Activated CD4-positive, alpha-beta T cell treated with anti-CD3 and anti-CD28 coated beads for 36 hours (primary cell): ENCODE measurements at regions of chr5 and their contacts with region 1.

Region 1: DNA sequence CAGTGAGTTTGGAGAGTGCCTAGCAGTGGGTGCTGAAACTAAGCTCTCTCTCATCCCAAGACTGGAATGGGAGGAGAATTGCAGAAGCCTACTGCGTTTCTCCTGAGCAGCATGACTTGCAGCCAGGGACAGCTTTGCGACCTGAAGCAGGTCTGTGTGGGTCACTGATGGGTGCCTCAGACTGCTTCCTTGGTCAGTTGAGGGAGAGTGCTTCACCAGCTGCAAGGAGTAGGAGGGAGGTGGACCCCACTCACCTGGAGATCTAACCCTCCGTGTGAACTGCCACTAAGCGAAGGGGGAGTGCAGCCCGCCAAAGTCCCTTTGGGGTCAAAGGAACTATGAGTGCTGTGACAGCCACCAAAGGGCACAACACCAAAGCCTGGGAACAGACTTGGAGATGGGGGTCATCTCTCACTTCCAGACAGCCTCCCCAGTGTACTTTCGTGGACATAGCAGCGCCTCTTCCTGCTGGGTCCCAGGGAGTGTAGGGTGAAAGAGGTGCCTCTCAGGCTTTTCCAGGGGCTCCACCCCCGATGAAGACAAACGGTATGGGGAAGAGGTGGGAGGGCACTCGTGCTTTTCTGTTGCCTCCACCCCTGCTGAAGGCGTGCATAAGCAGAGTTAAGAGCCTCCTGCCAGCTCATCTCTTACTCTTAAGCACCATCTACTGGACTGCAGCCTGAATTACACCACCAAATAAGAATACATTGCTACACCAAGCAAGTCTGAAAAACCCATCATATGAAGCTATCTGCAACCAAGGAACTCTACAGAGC is 34.3 kb upstream of the MACIR start:
- DNase-seq: peak; percentile 51
- ATAC-seq: peak; percentile 91
- H3K4me3 Mint-ChIP-seq: no peak overlapping the region
- H3K27ac Mint-ChIP-seq: no peak overlapping the region
- H3K4me1 Mint-ChIP-seq: no peaks in the 10 kb centered on the region
- H3K27me3 Mint-ChIP-seq: peaks cover 7% of the 10 kb centered on the region

Region 2: DNA sequence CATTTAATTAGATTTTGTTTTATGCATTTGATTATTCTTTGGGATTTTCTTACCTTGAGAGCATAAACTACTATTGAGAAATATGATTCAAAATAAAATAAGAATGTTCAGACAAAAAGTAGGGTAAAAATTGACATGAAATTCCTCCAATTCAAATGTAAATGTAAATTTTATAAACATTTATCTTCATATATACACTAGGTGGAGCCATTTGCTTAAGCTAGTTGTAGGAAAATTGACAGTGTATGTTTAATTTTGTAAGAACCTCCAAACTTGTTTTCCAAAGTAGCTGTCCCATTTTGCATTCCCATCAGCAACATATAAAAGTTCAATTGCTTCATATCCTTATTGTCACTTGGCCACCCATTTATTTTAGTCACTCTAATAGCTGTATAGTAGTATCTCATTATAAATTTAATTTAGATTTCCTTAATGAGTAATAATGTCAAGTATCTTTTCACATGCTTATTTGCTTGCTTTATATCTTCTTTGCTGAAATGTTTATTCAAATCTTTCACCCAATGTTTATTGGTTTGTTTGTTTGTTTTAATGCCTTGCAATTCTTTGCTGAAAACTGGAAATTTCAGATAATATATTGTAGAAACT is 687.9 kb before region 1 on chr5:
- CTCF ChIA-PET with region 1: interaction called, 3 read pairs
- POLR2A ChIA-PET with region 1: no interaction called
- intact Hi-C with region 1: loop called in 1 of 2 experiments (anchors 1 kb)
- DNase-seq: no peak
- ATAC-seq: no peak
- H3K4me3 Mint-ChIP-seq: no peak overlapping the region
- H3K27ac Mint-ChIP-seq: no peak overlapping the region
- H3K4me1 Mint-ChIP-seq: no peaks in the 10 kb centered on the region
- H3K27me3 Mint-ChIP-seq: peaks cover 4% of the 10 kb centered on the region

Region 3: DNA sequence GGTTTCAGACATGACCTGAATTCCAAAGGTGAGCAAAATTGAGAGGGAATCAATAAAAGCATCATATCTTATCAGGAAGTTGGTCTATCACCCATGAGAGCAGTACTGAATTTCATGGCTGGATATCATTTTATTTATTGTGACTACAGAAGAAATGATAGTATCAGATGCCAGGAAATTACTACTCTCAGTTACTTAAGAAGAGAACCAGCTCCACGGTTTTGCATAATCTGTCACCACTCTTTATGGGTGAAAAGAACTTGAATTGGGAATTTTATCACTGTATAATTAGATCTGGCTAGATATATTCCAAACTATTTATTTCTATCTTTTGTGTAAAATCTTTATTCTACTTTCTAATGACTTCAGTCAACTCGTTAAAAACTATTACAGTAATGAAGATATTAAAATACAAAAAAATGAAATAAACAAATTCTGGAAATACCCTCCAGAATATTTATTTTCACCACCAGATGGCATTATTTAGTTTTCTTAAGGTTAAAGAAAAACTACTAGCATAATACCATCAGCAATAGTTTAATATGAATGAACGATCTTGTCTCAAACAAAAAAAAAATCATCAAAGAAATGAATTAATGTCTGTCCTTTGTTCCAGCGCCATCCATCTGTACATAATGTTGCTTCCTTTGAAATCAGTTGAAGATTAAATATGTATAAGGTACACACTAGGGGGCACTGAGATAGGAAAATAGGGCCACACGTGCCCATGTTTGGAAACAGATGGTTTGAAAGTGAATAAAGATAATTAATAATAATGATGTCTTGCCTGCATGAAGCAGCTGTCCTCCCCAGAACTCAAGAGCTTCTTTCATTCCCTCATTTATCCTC is 640.8 kb before region 1 on chr5:
- CTCF ChIA-PET with region 1: no interaction called
- POLR2A ChIA-PET with region 1: no interaction called
- intact Hi-C with region 1: loop called in 1 of 2 experiments (anchors 2 kb)
- DNase-seq: no peak
- ATAC-seq: no peak
- H3K4me3 Mint-ChIP-seq: no peak overlapping the region
- H3K27ac Mint-ChIP-seq: no peak overlapping the region
- H3K4me1 Mint-ChIP-seq: no peaks in the 10 kb centered on the region
- H3K27me3 Mint-ChIP-seq: peaks cover 2% of the 10 kb centered on the region

Region 4: DNA sequence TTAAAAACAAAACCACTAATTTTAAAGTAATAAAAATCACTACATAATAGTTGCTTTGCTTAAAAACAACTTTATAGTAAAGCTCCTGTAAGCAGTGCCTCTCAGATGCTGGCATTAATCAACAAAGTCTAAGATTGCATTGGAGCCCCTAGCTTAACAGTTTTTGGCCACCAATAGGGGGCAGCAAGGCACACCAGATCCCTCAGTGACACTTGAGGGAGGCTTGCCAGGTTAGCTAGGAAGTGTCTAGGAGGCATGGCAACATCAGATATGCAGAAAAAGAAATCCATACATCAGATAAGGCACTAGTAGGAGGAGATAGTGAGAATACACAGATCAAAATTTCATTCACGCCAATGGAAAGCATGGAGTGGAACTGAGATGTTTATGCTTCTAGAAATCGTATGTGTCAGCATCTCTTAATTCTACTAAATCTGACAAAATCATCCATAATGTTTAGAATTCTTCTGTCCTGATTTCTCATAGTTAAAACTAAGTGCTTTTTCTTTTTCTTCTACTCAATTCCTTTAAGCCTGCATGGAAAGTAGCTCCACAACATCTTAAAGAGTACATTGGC is 542.8 kb before region 1 on chr5:
- CTCF ChIA-PET with region 1: interaction called, 11 read pairs
- POLR2A ChIA-PET with region 1: no interaction called
- intact Hi-C with region 1: loop called in 1 of 2 experiments (anchors 5 kb)
- DNase-seq: peak; percentile 81
- ATAC-seq: peak; percentile 85
- H3K4me3 Mint-ChIP-seq: no peak overlapping the region
- H3K27ac Mint-ChIP-seq: no peak overlapping the region
- H3K4me1 Mint-ChIP-seq: no peaks in the 10 kb centered on the region
- H3K27me3 Mint-ChIP-seq: no peaks in the 10 kb centered on the region

Region 5: DNA sequence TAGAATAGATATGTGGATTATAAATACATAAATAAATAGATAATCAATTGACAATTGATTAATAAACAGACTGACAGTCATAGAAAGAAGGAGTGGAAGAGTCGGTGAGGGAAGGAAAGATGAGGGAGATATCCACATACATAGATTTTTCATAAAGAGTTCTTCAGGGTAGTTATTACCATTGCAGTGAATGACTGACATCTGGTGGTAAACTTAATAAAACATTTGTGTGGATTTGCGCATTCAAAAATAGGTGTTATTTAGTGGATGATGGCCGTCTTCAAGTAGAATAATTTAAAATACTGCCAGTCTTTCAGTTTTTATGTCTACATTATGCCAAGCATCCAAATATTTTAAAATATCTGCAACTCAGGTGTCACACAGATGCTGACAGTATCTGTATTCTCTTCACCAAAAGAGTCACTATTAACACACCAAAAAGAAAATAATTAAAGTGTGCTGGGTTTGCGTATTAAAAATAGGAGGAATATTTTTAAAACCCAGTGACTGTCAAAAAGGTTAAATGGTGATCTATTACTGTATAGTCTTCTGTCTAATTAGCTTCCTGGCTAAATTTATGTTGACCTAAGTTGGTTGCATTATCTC is 183.1 kb before region 1 on chr5:
- CTCF ChIA-PET with region 1: interaction called, 3 read pairs
- POLR2A ChIA-PET with region 1: no interaction called
- intact Hi-C with region 1: loop called in 1 of 2 experiments (anchors 10 kb)
- DNase-seq: no peak
- ATAC-seq: no peak
- H3K4me3 Mint-ChIP-seq: no peak overlapping the region
- H3K27ac Mint-ChIP-seq: no peak overlapping the region
- H3K4me1 Mint-ChIP-seq: no peaks in the 10 kb centered on the region
- H3K27me3 Mint-ChIP-seq: no peaks in the 10 kb centered on the region

Region 6: GRCh38 chr5:103211576-103212561 is 12.4 kb before region 1 on chr5:
- CTCF ChIA-PET with region 1: interaction called, 23 read pairs
- POLR2A ChIA-PET with region 1: interaction called, 5 read pairs
- intact Hi-C with region 1: no loop called
- DNase-seq: no peak
- ATAC-seq: peak; percentile 63
- H3K4me3 Mint-ChIP-seq: no peak overlapping the region
- H3K27ac Mint-ChIP-seq: peak overlapping the region; percentile 22
- H3K4me1 Mint-ChIP-seq: peaks cover 18% of the 10 kb centered on the region
- H3K27me3 Mint-ChIP-seq: no peaks in the 10 kb centered on the region